Heart right ventricle (tissue), 16 donors: ENCODE measurements at regions of chr16 and their contacts with region 1.

Region 1: DNA sequence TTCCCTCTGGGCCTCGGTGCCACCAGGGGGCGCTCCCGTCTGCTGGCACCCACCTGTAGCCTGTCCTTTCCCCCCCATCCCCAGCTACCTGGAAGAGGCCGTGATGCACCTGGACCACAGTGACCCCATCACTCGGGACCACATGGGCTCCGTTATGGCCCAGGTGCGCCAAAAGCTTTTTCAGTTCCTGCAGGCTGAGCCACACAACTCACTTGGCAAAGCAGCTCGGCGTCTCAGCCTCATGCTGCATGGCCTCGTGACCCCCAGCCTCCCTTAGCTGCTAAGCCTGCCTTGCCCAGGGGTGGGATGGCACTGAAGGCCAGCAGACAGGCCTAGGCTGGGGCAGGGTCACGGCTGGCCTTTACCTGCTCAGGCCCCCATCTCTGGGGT is 818 bp upstream of the NRN1L start:
- DNase-seq: peak; percentile 36 to 70
- ATAC-seq: peak in 7 of 8 donors; percentile 27 to 75 (median 48)
- H3K4me3 ChIP-seq: no peak overlapping the region
- H3K27ac ChIP-seq: peak overlapping the region in 7 of 10 donors; percentile 18 to 91 (median 80)
- H3K4me1 ChIP-seq: peaks cover 19 to 55% (median 25%) of the 10 kb centered on the region in 9 donors
- H3K27me3 ChIP-seq: no peaks in the 10 kb centered on the region
- CTCF ChIP-seq: peak; percentile 17 to 91 (median 87)

Region 2: DNA sequence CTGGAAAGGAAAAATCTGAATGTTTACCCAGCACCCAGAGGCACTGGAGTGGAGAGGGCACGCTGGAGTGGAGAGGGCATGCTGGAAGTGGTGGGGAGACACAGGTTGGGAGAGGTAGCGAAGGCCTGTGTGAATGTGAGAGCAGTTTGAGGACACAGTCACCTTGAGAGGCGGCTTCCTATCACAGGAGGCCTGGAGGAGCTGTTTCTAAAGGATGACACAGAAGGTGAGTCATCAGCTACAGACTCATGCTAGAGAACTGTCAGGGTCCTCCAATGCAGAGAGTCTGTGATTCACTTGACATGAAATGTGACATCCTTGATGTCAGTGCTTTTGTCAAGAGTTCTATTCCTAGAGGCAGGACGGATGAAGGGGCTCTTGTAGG is 34.0 kb after region 1 on chr16:
- intact Hi-C with region 1: loop called in 1 of 10 experiments (anchors 5 kb)
- DNase-seq: no peak
- ATAC-seq: peak in 5 of 8 donors; percentile 8 to 73 (median 36)
- H3K4me3 ChIP-seq: no peak overlapping the region
- H3K27ac ChIP-seq: peak overlapping the region in 9 of 10 donors; percentile 17 to 83 (median 53)
- H3K4me1 ChIP-seq: peaks cover 25 to 82% (median 61%) of the 10 kb centered on the region in 9 donors
- H3K27me3 ChIP-seq: no peaks in the 10 kb centered on the region
- CTCF ChIP-seq: no peak

Region 3: GRCh38 chr16:67928561-67929364 is 44.9 kb after region 1 on chr16:
- intact Hi-C with region 1: loop called in 9 of 10 experiments (anchors 2 to 5 kb)
- DNase-seq: peak; percentile 67 to 78
- ATAC-seq: peak; percentile 51 to 77 (median 67)
- H3K4me3 ChIP-seq: no peak overlapping the region
- H3K27ac ChIP-seq: peak overlapping the region in 1 of 10 donors; percentile 4
- H3K4me1 ChIP-seq: peaks cover 0 to 39% (median 20%) of the 10 kb centered on the region in 9 donors
- H3K27me3 ChIP-seq: no peaks in the 10 kb centered on the region
- CTCF ChIP-seq: peak; percentile 69 to 91 (median 85)

Region 4: GRCh38 chr16:68022704-68023522 is 139.0 kb after region 1 on chr16 and contains the starts of genes DDX28 and DUS2:
- intact Hi-C with region 1: loop called in 1 of 10 experiments (anchors 5 kb)
- DNase-seq: peak; percentile 93 to 94
- ATAC-seq: peak; percentile 96 to 99 (median 98)
- H3K4me3 ChIP-seq: peak within 1 kb of the TSS; percentile 73 to 100 (median 98)
- H3K27ac ChIP-seq: peak within 1 kb of the TSS; percentile 61 to 92 (median 84)
- H3K4me1 ChIP-seq: peaks cover 5 to 33% (median 27%) of the 10 kb centered on the region in 9 donors
- H3K27me3 ChIP-seq: no peaks in the 10 kb centered on the region
- CTCF ChIP-seq: no peak
- total RNA-seq, gene DDX28: 8.4 to 13.1 (median 9.7) TPM
- total RNA-seq, gene DUS2: 4.8 to 13.1 (median 7.2) TPM

Region 5: DNA sequence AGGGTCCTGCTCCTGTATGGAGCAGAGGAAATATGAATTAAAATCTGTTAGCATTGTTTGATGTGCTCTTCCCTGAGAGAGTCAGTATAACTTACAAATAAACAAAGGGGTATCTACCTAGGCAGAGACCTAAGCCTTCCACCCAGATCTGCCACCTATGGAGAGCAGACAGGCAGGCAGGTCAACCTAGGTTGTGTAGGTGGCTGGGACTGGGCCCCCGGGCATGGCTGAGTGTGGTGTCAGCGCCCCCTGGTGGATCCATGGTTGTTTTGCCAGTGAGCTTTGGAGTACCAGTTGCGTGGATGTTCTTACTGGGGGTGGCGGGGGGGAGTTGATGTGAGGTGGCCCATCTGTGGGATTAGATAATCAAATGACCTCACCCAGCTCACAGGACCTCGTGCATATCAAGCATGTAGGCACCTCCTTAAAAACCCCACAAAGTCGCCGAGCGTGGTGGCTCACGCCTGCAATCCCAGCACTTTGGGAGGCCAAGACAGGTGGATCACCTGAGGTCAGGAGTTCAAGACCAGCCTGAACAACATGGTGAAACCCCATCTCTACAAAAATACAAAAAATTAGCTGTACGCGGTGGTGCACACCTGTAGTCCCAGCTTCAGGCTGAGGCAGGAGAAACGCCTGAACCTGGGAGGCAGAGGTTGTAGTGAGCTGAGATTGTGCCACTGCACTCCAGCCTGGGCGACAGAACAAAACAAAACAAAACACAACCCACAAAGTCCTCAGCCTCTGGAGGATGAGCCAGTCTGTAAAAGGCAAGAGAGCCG is 156.8 kb after region 1 on chr16:
- intact Hi-C with region 1: loop called in 6 of 10 experiments (anchors 2 to 5 kb)
- DNase-seq: peak; percentile 83 to 84
- ATAC-seq: peak; percentile 89 to 96 (median 94)
- H3K4me3 ChIP-seq: no peak overlapping the region
- H3K27ac ChIP-seq: peak overlapping the region in 1 of 10 donors; percentile 69
- H3K4me1 ChIP-seq: peaks cover 0 to 45% (median 0%) of the 10 kb centered on the region in 9 donors
- H3K27me3 ChIP-seq: no peaks in the 10 kb centered on the region
- CTCF ChIP-seq: peak; percentile 73 to 88 (median 83)